B cell (primary cell): ENCODE measurements at regions of chr14 and their contacts with region 1.

Region 1: GRCh38 chr14:76050797-76051392 is 65.3 kb downstream of the IFT43 start:
- DNase-seq: peak; percentile 66
- ATAC-seq: peak; percentile 33
- H3K4me3 ChIP-seq: no peak overlapping the region
- H3K4me3 Mint-ChIP-seq: no peak overlapping the region
- H3K27ac ChIP-seq: no peak overlapping the region
- H3K27ac Mint-ChIP-seq: no peak overlapping the region
- H3K4me1 ChIP-seq: no peaks in the 10 kb centered on the region
- H3K4me1 Mint-ChIP-seq: peaks cover 4% of the 10 kb centered on the region
- H3K27me3 ChIP-seq: no peaks in the 10 kb centered on the region
- H3K27me3 Mint-ChIP-seq: no peaks in the 10 kb centered on the region
- CTCF ChIP-seq: peak; percentile 92

Region 2: DNA sequence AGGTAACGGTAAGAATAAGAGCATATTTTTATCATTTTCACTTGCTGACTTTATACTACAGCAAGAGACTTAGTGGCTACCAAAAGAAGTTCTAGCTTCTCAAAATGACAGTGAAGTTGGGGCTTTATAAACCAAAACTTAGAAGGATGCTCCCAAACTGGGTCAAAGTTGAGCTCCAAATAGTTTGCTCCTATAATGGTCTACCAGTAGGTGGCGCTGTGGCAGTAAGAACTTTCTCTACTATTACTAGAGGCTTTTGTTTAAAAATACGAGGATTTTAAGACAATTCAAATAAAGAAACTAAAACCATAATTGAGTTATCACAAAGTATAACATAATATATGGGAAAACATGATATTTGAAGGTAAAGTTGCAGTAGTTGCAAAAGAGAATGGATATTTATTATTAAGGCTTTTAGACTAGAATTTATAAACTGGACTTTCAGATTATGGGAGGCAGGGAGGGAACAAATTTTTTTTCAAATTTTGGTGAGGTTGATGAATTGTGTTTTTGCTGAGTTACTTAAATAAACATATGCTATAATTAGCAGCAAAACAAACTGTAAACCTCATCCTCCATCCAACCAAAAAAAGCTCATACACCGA is 144.1 kb before region 1 on chr14:
- CTCF ChIA-PET with region 1: interaction called, 12 read pairs
- POLR2A ChIA-PET with region 1: no interaction called
- intact Hi-C with region 1: no loop called
- DNase-seq: peak; percentile 76
- ATAC-seq: no peak
- H3K4me3 ChIP-seq: no peak overlapping the region
- H3K4me3 Mint-ChIP-seq: no peak overlapping the region
- H3K27ac ChIP-seq: no peak overlapping the region
- H3K27ac Mint-ChIP-seq: no peak overlapping the region
- H3K4me1 ChIP-seq: no peaks in the 10 kb centered on the region
- H3K4me1 Mint-ChIP-seq: no peaks in the 10 kb centered on the region
- H3K27me3 ChIP-seq: no peaks in the 10 kb centered on the region
- H3K27me3 Mint-ChIP-seq: no peaks in the 10 kb centered on the region
- CTCF ChIP-seq: peak; percentile 97

Region 3: DNA sequence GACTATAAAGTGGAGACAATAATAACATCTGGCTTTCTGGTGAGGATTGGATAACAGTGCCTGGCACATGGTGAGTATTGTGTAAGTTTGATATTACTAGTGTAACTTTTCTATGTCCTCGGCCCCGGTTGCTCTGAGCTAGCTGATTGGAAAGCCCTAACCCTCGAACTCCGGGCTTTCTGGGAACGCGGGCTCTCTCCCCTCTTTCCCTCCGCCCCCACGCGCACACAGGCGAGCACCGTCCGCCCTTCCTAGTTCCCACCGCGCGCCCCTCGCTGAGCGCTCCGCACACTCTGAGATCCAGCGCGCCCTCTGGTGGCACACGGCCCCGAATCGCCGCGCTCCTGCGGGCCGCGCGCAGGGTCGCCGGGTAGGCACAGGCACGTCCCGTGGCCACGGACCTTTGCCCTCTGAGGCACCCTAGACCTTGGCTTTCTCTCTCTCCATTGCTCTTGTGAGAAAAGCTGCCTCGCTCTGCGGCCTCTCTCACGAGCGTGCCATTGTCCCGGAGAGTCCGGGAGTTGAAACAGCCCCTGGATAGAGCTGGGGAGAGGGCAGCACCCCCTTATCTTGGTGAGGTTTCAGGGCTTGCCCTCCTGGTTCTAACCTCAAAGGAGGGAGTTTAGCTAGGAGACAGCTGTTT is 301.9 kb after region 1 on chr14:
- CTCF ChIA-PET with region 1: interaction called, 121 read pairs
- POLR2A ChIA-PET with region 1: no interaction called
- intact Hi-C with region 1: no loop called
- DNase-seq: peak; percentile 63
- ATAC-seq: no peak
- H3K4me3 ChIP-seq: no peak overlapping the region
- H3K4me3 Mint-ChIP-seq: peak overlapping the region; percentile 16
- H3K27ac ChIP-seq: no peak overlapping the region
- H3K27ac Mint-ChIP-seq: no peak overlapping the region
- H3K4me1 ChIP-seq: peaks cover 3 to 6% of the 10 kb centered on the region in 2 donors
- H3K4me1 Mint-ChIP-seq: peaks cover 4% of the 10 kb centered on the region
- H3K27me3 ChIP-seq: peaks cover 0 to 22% (median 4%) of the 10 kb centered on the region in 4 experiments
- H3K27me3 Mint-ChIP-seq: peaks cover 51% of the 10 kb centered on the region
- CTCF ChIP-seq: peak; percentile 77

Region 4: DNA sequence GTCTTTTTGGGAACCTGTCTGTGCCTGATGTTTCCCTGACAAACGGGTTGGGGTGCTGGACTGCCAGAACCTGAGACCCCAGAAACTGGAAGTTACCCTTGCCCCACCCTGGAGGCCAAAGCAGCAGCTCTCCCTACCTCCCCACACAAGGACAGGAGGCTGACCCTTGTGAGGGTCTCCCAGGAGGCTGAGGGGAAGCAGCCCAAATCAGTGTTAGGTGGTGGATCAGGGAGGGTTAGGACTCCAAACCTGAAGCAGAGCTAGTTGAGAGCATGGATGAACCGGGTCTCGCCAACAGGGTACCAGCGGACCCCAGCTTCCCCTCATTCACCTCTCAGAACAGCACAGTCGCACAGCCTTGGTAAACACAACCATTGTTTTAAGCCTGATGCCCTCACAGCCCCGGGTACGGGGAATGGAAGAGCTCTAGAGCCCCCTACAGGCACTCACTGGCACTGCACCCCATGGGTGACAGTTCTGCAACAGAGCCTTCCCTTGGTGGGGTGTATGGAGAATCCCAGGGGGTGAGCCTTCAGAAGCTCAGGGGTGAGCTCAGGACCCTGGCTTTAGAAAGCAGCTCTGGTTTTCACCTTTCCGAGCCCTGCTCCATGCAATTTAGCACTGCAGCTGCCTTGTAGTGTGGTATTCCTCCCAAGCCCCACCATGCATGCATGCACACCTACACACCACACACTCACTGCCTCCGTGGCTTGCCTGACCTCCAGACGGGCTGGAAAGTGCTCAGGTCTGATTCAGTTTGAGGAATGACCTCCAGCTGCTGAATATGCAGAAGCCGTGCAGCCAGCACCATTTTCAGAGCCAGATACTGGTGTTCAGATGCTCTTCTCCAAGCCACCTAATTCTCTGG is 336.3 kb after region 1 on chr14:
- CTCF ChIA-PET with region 1: interaction called, 12 read pairs
- POLR2A ChIA-PET with region 1: no interaction called
- intact Hi-C with region 1: no loop called
- DNase-seq: peak; percentile 45
- ATAC-seq: peak; percentile 43
- H3K4me3 ChIP-seq: no peak overlapping the region
- H3K4me3 Mint-ChIP-seq: no peak overlapping the region
- H3K27ac ChIP-seq: no peak overlapping the region
- H3K27ac Mint-ChIP-seq: no peak overlapping the region
- H3K4me1 ChIP-seq: no peaks in the 10 kb centered on the region
- H3K4me1 Mint-ChIP-seq: no peaks in the 10 kb centered on the region
- H3K27me3 ChIP-seq: peaks cover 0 to 21% (median 8%) of the 10 kb centered on the region in 4 experiments
- H3K27me3 Mint-ChIP-seq: peaks cover 53% of the 10 kb centered on the region
- CTCF ChIP-seq: peak; percentile 75

Region 5: DNA sequence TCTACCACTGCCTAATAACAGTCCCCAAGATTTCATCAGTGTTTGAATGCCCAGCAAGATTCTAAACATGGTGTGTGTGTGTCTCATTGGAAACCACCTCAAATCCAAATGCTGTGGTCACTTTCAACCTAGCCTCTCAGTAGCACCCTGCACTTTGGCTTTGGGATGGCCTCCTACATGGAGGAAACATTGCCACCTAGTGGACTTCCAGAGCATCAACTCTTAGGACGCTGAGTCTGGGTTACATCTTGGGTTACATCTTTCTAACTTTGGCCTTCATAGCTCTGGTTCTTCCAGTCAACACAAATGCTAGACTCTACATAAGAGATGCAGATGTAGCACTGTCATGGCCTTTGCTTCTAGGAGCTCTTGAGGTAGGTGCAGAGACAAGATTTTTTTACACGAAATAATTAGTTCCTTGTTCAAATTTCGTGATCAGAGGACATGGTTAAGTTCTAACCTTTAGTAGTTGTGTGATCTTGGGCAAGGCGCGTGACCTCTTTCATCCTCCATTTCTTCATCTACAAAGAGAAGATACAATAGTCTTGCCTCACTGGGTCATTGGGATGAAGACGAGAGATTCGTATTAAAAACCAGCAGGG is 596.9 kb after region 1 on chr14:
- CTCF ChIA-PET with region 1: interaction called, 46 read pairs
- POLR2A ChIA-PET with region 1: no interaction called
- intact Hi-C with region 1: no loop called
- DNase-seq: peak; percentile 38
- ATAC-seq: no peak
- H3K4me3 ChIP-seq: no peak overlapping the region
- H3K4me3 Mint-ChIP-seq: no peak overlapping the region
- H3K27ac ChIP-seq: no peak overlapping the region
- H3K27ac Mint-ChIP-seq: no peak overlapping the region
- H3K4me1 ChIP-seq: no peaks in the 10 kb centered on the region
- H3K4me1 Mint-ChIP-seq: no peaks in the 10 kb centered on the region
- H3K27me3 ChIP-seq: peaks cover 0 to 5% (median 1%) of the 10 kb centered on the region in 4 experiments
- H3K27me3 Mint-ChIP-seq: peaks cover 13% of the 10 kb centered on the region
- CTCF ChIP-seq: peak; percentile 82